ENCODE measurements at regions of chr20 and their contacts with region 1.

Region 1: GRCh38 chr20:4661191-4661590 is 60.5 kb upstream of the PRND start:
- DNase-seq: peak; percentile 53
- ATAC-seq: no peak
- H3K4me3 Mint-ChIP-seq: no peak overlapping the region
- H3K27ac Mint-ChIP-seq: peak overlapping the region; percentile 63
- H3K4me1 Mint-ChIP-seq: peaks cover 35% of the 10 kb centered on the region
- H3K27me3 Mint-ChIP-seq: peaks cover 20% of the 10 kb centered on the region

Region 2: DNA sequence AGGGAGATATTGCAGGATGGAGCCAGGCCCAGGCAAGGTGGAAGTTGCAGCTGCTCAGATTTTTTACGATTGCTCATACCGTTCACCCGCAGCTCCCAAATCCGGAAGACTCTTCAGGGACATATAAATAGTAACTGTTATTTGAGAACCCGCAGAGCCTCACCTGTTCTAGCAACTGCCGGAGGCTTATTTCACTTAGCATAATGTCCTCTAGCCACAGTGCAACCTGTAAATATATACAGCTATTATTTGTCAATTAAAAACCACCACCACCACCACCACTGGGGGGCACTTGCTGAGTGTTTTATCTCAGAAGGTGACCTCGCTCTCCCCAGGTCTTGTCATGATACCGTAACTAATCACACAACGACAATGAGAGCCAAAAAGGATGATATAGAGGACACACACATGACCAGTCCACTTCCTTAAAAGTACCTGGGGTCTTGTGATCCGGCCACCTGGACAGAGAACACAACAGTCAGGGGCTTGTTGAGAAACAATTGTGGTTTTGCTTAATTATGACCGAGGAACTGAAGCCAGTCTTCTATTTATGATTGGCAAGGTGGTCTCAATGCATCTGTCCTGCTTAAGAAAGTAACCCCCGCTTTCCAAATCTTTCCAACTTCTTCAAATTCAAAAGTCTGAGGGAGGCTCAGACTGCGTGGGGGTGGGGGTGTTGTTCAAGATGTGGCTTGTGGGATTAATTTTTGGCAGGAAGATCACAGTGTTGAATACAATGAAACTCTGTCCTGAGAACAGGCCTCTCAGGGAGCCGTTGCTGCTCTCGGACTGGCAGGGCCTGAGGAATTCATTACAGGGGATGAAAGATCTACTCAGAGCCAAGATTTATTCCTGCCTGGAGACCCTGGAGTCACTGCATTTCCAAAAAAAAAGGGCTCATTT is 47.2 kb before region 1 on chr20:
- CTCF ChIA-PET with region 1: interaction called, 10 read pairs
- POLR2A ChIA-PET with region 1: no interaction called
- DNase-seq: peak; percentile 83
- ATAC-seq: peak; percentile 87
- H3K4me3 Mint-ChIP-seq: no peak overlapping the region
- H3K27ac Mint-ChIP-seq: no peak overlapping the region
- H3K4me1 Mint-ChIP-seq: peaks cover 8% of the 10 kb centered on the region
- H3K27me3 Mint-ChIP-seq: peaks cover 10% of the 10 kb centered on the region

Region 3: GRCh38 chr20:4645646-4646045 is 15.5 kb before region 1 on chr20:
- CTCF ChIA-PET with region 1: no interaction called
- POLR2A ChIA-PET with region 1: no interaction called
- DNase-seq: no peak
- ATAC-seq: no peak
- H3K4me3 Mint-ChIP-seq: no peak overlapping the region
- H3K27ac Mint-ChIP-seq: no peak overlapping the region
- H3K4me1 Mint-ChIP-seq: no peaks in the 10 kb centered on the region
- H3K27me3 Mint-ChIP-seq: peaks cover 19% of the 10 kb centered on the region